Endothelial cell of umbilical vein (primary cell): ENCODE measurements at regions of chr5 and their contacts with region 1.

Region 1: GRCh38 chr5:102959055-102959454 is 160.9 kb downstream of the GIN1 start:
- DNase-seq: peak; percentile 91
- H3K4me3 ChIP-seq: peak overlapping the region in 1 of 3 experiments; percentile 18
- H3K27ac ChIP-seq: peak overlapping the region; percentile 97
- H3K4me1 ChIP-seq: peaks cover 24% of the 10 kb centered on the region
- H3K27me3 ChIP-seq: no peaks in the 10 kb centered on the region
- CTCF ChIP-seq: no peak
- POLR2A ChIP-seq: no peak

Region 2: GRCh38 chr5:102911973-102912372 is 47.1 kb before region 1 on chr5:
- CTCF ChIA-PET with region 1: interaction called, 3 read pairs
- POLR2A ChIA-PET with region 1: no interaction called
- dilution Hi-C with region 1: no loop called
- intact Hi-C with region 1: loop called (anchors 2 kb)
- DNase-seq: peak; percentile 89
- H3K4me3 ChIP-seq: no peak overlapping the region
- H3K27ac ChIP-seq: peak overlapping the region; percentile 63
- H3K4me1 ChIP-seq: peaks cover 29% of the 10 kb centered on the region
- H3K27me3 ChIP-seq: no peaks in the 10 kb centered on the region
- CTCF ChIP-seq: no peak
- POLR2A ChIP-seq: peak; percentile 48

Region 3: GRCh38 chr5:102971697-102972293 is 12.7 kb after region 1 on chr5:
- CTCF ChIA-PET with region 1: interaction called, 4 read pairs
- POLR2A ChIA-PET with region 1: no interaction called
- dilution Hi-C with region 1: no loop called
- intact Hi-C with region 1: loop called (anchors 2 kb)
- DNase-seq: peak; percentile 40
- H3K4me3 ChIP-seq: no peak overlapping the region
- H3K27ac ChIP-seq: no peak overlapping the region
- H3K4me1 ChIP-seq: peaks cover 28% of the 10 kb centered on the region
- H3K27me3 ChIP-seq: no peaks in the 10 kb centered on the region
- CTCF ChIP-seq: peak; percentile 27 to 29
- POLR2A ChIP-seq: no peak

Region 4: GRCh38 chr5:103119765-103120606 is 160.9 kb after region 1 on chr5 and contains the starts of genes GIN1 and PPIP5K2:
- CTCF ChIA-PET with region 1: no interaction called
- POLR2A ChIA-PET with region 1: no interaction called
- dilution Hi-C with region 1: no loop called
- intact Hi-C with region 1: loop called (anchors 5 kb)
- DNase-seq: peak; percentile 99
- H3K4me3 ChIP-seq: peak within 1 kb of the TSS; percentile 63 to 92 (median 92)
- H3K27ac ChIP-seq: peak within 1 kb of the TSS; percentile 93
- H3K4me1 ChIP-seq: peaks cover 19% of the 10 kb centered on the region
- H3K27me3 ChIP-seq: no peaks in the 10 kb centered on the region
- CTCF ChIP-seq: no peak
- POLR2A ChIP-seq: peak; percentile 50
- total RNA-seq, gene GIN1: 4.4 and 6.7 TPM in 2 replicates
- total RNA-seq, gene PPIP5K2: 53.5 and 69.4 TPM in 2 replicates